ENCODE measurements at regions of chr11 and their contacts with region 1.

Region 1: GRCh38 chr11:95150946-95151684 is 61.5 kb downstream of the ENDOD1 start:
- DNase-seq: peak; percentile 90
- H3K4me3 Mint-ChIP-seq: peak overlapping the region; percentile 79
- H3K27ac Mint-ChIP-seq: peak overlapping the region; percentile 82
- H3K4me1 Mint-ChIP-seq: peaks cover 69% of the 10 kb centered on the region
- H3K27me3 Mint-ChIP-seq: no peaks in the 10 kb centered on the region
- CTCF ChIP-seq: peak; percentile 68

Region 2: DNA sequence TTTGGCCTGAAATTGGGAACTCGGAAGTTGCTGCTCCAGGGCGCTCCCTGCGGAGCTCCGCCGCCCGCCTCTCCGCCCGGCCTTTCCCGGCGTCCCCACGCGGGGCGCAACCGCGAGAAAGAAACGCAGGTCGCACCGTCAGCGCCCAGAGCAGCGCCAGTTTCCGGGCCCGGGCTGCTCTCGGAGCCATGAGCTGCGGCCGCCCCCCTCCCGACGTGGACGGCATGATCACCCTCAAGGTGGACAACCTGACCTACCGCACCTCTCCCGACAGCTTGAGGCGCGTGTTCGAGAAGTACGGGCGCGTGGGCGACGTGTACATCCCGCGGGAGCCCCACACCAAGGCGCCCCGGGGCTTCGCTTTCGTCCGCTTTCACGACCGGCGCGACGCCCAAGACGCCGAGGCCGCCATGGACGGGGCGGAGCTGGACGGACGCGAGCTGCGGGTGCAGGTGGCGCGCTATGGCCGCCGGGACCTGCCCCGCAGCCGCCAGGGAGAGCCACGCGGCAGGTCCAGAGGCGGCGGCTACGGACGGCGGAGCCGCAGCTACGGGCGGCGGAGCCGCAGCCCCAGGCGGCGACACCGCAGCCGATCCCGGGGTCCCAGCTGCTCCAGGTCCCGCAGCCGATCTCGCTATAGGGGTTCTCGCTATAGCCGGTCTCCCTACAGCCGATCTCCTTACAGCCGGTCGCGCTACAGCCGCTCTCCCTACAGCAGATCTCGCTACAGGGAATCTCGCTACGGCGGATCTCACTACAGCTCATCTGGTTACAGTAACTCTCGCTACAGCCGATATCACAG is 83.9 kb before region 1 on chr11:
- CTCF ChIA-PET with region 1: interaction called, 11 read pairs
- intact Hi-C with region 1: loop called (anchors 1 kb)
- DNase-seq: peak; percentile 82
- H3K4me3 Mint-ChIP-seq: peak overlapping the region; percentile 96
- H3K27ac Mint-ChIP-seq: peak overlapping the region; percentile 91
- H3K4me1 Mint-ChIP-seq: peaks cover 8% of the 10 kb centered on the region
- H3K27me3 Mint-ChIP-seq: no peaks in the 10 kb centered on the region
- CTCF ChIP-seq: peak; percentile 42

Region 3: GRCh38 chr11:95322546-95322945 is 171.4 kb after region 1 on chr11:
- CTCF ChIA-PET with region 1: no interaction called
- intact Hi-C with region 1: no loop called
- DNase-seq: no peak
- H3K4me3 Mint-ChIP-seq: no peak overlapping the region
- H3K27ac Mint-ChIP-seq: no peak overlapping the region
- H3K4me1 Mint-ChIP-seq: peaks cover 8% of the 10 kb centered on the region
- H3K27me3 Mint-ChIP-seq: peaks cover 16% of the 10 kb centered on the region
- CTCF ChIP-seq: no peak

Region 4: DNA sequence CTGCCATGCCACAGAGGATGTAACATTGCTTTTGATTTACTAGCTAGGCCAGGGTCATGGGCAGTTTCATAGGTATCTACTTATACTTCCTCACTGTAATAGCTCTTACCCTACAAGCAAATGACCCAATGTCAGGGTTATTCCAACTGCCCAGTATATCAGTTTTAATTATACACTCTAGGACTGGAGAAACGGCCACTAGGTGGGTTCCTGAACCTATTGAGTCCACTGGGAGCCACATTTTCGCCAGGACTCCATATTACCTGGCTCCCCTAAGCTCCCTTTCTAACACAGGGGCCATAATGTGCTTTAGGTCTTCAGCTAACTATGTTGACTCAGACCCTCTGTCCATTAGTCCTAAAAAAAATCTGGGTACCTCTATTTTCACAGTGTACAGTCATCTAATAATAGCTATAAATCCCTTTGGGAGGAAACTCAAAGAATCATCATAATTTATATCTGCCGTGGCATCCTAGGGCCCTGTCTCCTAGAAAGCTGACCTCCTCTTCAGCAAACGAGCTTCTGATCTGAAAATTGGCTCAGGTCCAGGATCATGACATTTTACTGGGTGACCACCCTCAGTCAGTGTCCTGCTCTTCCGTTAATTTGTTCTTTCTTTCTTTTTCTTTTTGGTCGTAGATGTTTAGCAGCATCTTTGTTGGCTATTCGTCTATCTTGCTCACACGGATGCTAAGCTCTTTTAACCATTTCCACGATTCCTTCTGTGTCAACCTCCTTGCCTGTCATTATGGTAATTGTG is 394.2 kb after region 1 on chr11:
- CTCF ChIA-PET with region 1: no interaction called
- intact Hi-C with region 1: loop called (anchors 10 kb)
- DNase-seq: peak; percentile 2
- H3K4me3 Mint-ChIP-seq: no peak overlapping the region
- H3K27ac Mint-ChIP-seq: no peak overlapping the region
- H3K4me1 Mint-ChIP-seq: no peaks in the 10 kb centered on the region
- H3K27me3 Mint-ChIP-seq: peaks cover 10% of the 10 kb centered on the region
- CTCF ChIP-seq: no peak

Region 5: DNA sequence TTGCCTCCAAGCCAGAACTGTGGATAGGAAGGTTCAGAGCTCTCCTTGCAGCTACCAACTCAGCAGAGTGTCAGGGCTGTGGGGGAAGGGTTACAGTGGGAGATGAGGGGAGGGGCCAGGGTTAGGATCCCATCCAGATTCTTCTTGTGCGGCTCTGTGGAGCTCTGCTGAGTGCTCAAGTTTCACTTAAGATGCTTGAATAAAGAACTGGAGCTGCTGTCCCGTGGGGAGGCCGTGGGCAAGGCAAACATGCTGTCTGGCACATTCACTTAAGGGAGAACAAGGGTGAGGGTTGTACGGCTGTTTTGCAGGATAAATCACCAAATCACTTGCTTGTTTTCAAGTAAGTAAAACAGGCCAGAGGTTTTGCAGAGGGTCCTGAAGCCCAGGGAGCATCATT is 441.4 kb after region 1 on chr11:
- CTCF ChIA-PET with region 1: no interaction called
- intact Hi-C with region 1: no loop called
- DNase-seq: no peak
- H3K4me3 Mint-ChIP-seq: no peak overlapping the region
- H3K27ac Mint-ChIP-seq: no peak overlapping the region
- H3K4me1 Mint-ChIP-seq: no peaks in the 10 kb centered on the region
- H3K27me3 Mint-ChIP-seq: peaks cover 11% of the 10 kb centered on the region
- CTCF ChIP-seq: no peak

Region 6: DNA sequence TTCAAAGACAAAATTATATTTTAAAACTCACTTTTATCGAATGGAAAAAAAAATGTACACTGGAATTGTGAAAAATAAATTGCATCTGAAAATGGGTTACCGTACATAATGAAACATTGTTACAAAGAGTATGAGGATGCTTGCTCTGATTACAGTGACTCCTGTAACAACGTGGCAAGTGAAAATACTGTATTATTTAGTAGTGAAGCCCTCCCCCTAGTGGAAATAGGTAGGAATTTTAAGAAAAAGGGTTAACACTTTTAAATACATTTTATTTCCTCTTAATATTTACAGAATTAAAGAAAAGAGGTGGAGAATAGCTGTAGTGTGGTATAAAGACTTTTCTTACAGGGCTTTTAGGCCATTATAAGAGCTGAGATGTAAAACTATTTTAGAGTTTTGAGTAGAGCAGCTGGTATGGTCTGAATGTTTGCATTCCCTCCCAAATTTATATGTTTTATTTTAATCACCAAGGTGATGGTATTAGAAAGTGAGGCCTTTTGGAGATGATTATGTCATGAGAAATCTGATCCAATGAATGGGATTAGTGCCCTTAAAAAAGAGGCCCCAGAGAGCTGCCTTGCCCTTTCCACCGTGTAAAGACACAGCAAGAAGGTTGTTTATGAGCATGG is 613.3 kb after region 1 on chr11:
- CTCF ChIA-PET with region 1: interaction called, 5 read pairs
- intact Hi-C with region 1: loop called (anchors 1 kb)
- DNase-seq: no peak
- H3K4me3 Mint-ChIP-seq: no peak overlapping the region
- H3K27ac Mint-ChIP-seq: no peak overlapping the region
- H3K4me1 Mint-ChIP-seq: no peaks in the 10 kb centered on the region
- H3K27me3 Mint-ChIP-seq: no peaks in the 10 kb centered on the region
- CTCF ChIP-seq: peak; percentile 55